ENCODE measurements at regions of chr7 and their contacts with region 1.

Region 1: GRCh38 chr7:44112231-44113000 is 8.3 kb downstream of the AEBP1 start:
- DNase-seq: peak; percentile 64 to 83 (median 78)
- ATAC-seq: peak; percentile 69
- H3K4me3 ChIP-seq: peak overlapping the region; percentile 6
- H3K27ac ChIP-seq: no peak overlapping the region
- H3K4me1 ChIP-seq: peaks cover 10 to 59% of the 10 kb centered on the region in 2 experiments; a peak in 4 of 5 replicates
- H3K27me3 ChIP-seq: peaks cover 2 to 27% of the 10 kb centered on the region in 2 experiments; a peak in 3 of 5 replicates
- CTCF ChIP-seq: peak in 2 of 3 experiments; percentile 21 to 33; a peak in 1 of 6 replicates
- EP300 ChIP-seq: no peak
- POLR2A ChIP-seq: peak; percentile 53; the same call in 1 of the 2 replicates
- RAD21 ChIP-seq: peak in 1 of 2 experiments; percentile 20; a peak in 1 of 4 replicates

Region 2: GRCh38 chr7:43926798-43927123 is 185.7 kb before region 1 on chr7:
- CTCF ChIA-PET with region 1: no interaction called
- POLR2A ChIA-PET with region 1: no interaction called
- in situ Hi-C with region 1: no loop called
- intact Hi-C with region 1: no loop called
- DNase-seq: no peak
- ATAC-seq: peak; percentile 45
- H3K4me3 ChIP-seq: peak overlapping the region; percentile 63
- H3K27ac ChIP-seq: peak overlapping the region; percentile 88
- H3K4me1 ChIP-seq: peaks cover 15 to 17% of the 10 kb centered on the region in 2 experiments; a peak in 4 of 5 replicates
- H3K27me3 ChIP-seq: no peaks in the 10 kb centered on the region
- CTCF ChIP-seq: peak in 2 of 3 experiments; percentile 19 to 34; a peak in 3 of 6 replicates
- EP300 ChIP-seq: no peak
- POLR2A ChIP-seq: no peak
- RAD21 ChIP-seq: 0 out of 4 replicates have a peak, but pooled peaks of 1 of the 2 experiments have one; percentile 14

Region 3: DNA sequence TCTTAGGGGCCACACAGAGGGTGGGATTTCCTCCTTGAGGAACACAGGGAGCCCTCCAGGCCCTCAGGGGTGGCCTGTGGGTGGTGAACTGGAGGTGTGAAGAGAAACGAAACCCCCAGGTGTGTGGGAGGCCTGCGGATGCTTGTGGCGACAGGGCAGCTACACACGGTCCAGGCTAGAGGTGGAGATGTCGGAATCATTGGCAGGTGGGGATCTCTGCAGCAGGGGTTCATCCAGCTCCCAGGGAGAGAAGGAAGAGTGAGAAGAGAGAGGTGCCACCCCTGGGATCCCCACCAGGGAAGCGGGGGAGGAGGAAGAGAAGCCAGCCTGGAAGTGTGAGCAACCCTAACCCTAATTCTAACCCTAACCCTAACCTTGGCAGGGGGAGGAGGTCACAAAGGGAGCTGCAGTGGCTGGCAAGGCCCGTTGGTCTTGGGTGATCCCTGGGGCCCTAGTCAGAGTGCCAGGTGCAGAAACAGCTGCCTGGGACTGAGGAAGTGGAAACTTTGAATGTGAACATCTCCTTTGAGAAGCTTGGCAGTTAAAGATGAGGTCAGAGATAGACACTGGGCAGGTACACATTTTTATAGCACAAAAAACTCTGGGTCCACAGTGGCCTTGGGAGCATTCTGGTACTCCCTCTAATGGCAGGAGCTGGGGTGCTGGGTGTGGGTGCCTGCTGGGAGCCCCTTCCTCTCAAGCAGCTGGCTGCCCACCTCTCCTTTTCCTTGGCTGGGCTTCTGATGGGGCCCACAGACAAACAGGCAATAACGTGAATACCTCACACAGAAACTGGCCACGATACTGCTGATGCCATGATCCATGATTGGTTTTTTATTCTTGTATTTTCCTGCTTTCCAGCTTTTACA is 15.1 kb before region 1 on chr7:
- CTCF ChIA-PET with region 1: no interaction called
- POLR2A ChIA-PET with region 1: interaction called, 13 read pairs
- in situ Hi-C with region 1: no loop called
- intact Hi-C with region 1: no loop called
- DNase-seq: no peak
- ATAC-seq: no peak
- H3K4me3 ChIP-seq: no peak overlapping the region
- H3K27ac ChIP-seq: no peak overlapping the region
- H3K4me1 ChIP-seq: peaks cover 0 to 11% of the 10 kb centered on the region in 2 experiments; a peak in 4 of 5 replicates
- H3K27me3 ChIP-seq: peaks cover 0 to 5% of the 10 kb centered on the region in 2 experiments; a peak in 1 of 5 replicates
- CTCF ChIP-seq: no peak
- EP300 ChIP-seq: no peak
- POLR2A ChIP-seq: no peak
- RAD21 ChIP-seq: no peak

Region 4: GRCh38 chr7:44123190-44124003 is 11.0 kb after region 1 on chr7 and contains the start of gene POLD2:
- CTCF ChIA-PET with region 1: no interaction called
- POLR2A ChIA-PET with region 1: interaction called, 12 read pairs
- in situ Hi-C with region 1: no loop called
- intact Hi-C with region 1: no loop called
- DNase-seq: peak; percentile 98 to 99 (median 98)
- ATAC-seq: peak; percentile 99
- H3K4me3 ChIP-seq: peak within 1 kb of the TSS; percentile 93
- H3K27ac ChIP-seq: peak within 1 kb of the TSS; percentile 88
- H3K4me1 ChIP-seq: peaks cover 14 to 26% of the 10 kb centered on the region in 2 experiments; a peak in 4 of 5 replicates
- H3K27me3 ChIP-seq: no peaks in the 10 kb centered on the region
- CTCF ChIP-seq: no peak
- EP300 ChIP-seq: no peak
- POLR2A ChIP-seq: peak; percentile 84
- RAD21 ChIP-seq: no peak
- polyA plus RNA-seq, gene POLD2: 29.7 to 82.9 TPM

Measured in K562 (cell line).